Naive thymus-derived CD4-positive, alpha-beta T cell (primary cell): ENCODE measurements at regions of chr9 and their contacts with region 1.

Region 1: DNA sequence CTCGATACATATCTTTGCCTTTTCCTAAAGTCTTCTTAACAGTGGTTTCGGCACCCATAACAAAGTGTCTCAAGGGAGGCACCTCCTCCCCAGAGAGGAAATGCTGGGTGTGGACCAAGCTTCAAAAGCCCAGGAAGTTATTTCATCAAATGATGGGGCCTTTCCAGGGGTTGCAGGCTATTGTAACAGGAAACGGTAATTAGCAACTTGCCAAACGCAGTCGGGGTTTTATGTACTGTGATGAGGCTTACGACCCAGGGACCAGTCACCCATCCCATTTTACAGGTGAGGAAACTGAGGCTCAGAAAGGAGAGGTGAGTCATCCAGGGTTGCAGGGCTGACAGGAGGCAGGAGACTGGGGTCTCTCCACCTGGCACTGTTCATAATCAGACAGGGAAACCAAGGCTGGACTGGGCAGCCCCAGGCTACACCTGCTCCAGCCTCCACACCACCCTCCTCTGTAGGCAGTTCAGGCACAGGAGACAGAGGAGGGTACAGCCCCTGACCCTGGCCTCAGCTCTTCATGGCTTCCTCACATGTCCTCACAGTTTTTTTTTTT is 30.0 kb upstream of the SUSD3 start:
- DNase-seq: peak; percentile 38 to 94 (median 91)
- ATAC-seq: peak; percentile 93
- H3K4me3 ChIP-seq: peak overlapping the region; percentile 49
- H3K4me3 Mint-ChIP-seq: peak overlapping the region; percentile 80 to 91 (median 88)
- H3K27ac ChIP-seq: peak overlapping the region; percentile 90
- H3K27ac Mint-ChIP-seq: peak overlapping the region; percentile 96 to 100 (median 99)
- H3K4me1 ChIP-seq: peaks cover 62 to 93% of the 10 kb centered on the region in 2 donors
- H3K4me1 Mint-ChIP-seq: peaks cover 54 to 93% (median 82%) of the 10 kb centered on the region in 7 donors
- H3K27me3 ChIP-seq: no peaks in the 10 kb centered on the region
- H3K27me3 Mint-ChIP-seq: no peaks in the 10 kb centered on the region

Region 2: DNA sequence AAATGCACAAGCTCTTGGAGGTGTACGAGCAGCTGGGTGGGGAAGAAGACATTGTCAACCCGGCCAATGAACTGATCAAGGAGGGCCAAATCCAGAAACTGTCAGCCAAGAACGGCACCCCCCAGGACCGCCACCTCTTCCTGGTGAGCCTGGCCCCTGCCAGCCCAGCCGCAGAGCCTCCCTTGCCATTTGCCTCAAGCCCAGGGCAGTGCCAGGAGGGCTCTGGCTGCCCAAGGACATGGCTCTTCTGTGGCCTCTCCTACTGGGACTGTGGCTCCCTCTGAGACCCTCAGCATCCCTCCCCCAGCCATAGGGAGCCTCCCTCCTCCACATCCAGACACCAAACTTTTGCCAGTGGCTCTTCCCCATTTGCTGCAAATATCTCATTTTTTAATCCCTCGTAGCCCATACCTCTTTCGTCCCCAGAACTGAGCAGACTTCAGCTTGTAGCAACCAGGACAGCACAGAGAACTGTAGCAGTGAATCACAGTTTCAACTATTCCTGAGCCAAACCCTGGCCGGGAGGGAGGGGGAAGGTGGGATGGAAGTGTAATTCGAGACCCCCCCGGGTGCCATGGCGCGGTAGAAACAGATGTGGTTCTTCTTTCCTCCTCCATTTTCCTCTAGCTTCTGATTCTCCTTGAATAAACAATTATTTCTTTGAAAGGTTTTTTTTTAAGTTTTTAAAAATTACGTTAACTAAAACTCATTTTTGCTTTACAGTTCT is 14.5 kb before region 1 on chr9:
- CTCF ChIA-PET with region 1: interaction called, 11 read pairs
- POLR2A ChIA-PET with region 1: interaction called, 99 read pairs
- intact Hi-C with region 1: loop called in 1 of 2 experiments (anchors 2 kb)
- DNase-seq: no peak
- ATAC-seq: no peak
- H3K4me3 ChIP-seq: no peak overlapping the region
- H3K4me3 Mint-ChIP-seq: peak overlapping the region in 2 of 10 donors; percentile 14 to 20
- H3K27ac ChIP-seq: peak overlapping the region; percentile 0
- H3K27ac Mint-ChIP-seq: peak overlapping the region in 8 of 9 donors; percentile 27 to 91 (median 84)
- H3K4me1 ChIP-seq: peaks cover 0 to 8% of the 10 kb centered on the region in 2 donors
- H3K4me1 Mint-ChIP-seq: peaks cover 14 to 46% (median 25%) of the 10 kb centered on the region in 7 donors
- H3K27me3 ChIP-seq: no peaks in the 10 kb centered on the region
- H3K27me3 Mint-ChIP-seq: no peaks in the 10 kb centered on the region

Region 3: GRCh38 chr9:93041108-93041802 is 12.7 kb after region 1 on chr9:
- CTCF ChIA-PET with region 1: interaction called, 4 read pairs
- POLR2A ChIA-PET with region 1: interaction called, 94 read pairs
- intact Hi-C with region 1: loop called in 1 of 2 experiments (anchors 1 kb)
- DNase-seq: no peak
- ATAC-seq: no peak
- H3K4me3 ChIP-seq: no peak overlapping the region
- H3K4me3 Mint-ChIP-seq: peak overlapping the region in 5 of 10 donors; percentile 8 to 60 (median 48)
- H3K27ac ChIP-seq: peak overlapping the region; percentile 55
- H3K27ac Mint-ChIP-seq: peak overlapping the region; percentile 55 to 95 (median 92)
- H3K4me1 ChIP-seq: peaks cover 0 to 29% of the 10 kb centered on the region in 2 donors
- H3K4me1 Mint-ChIP-seq: peaks cover 32 to 85% (median 67%) of the 10 kb centered on the region in 7 donors
- H3K27me3 ChIP-seq: no peaks in the 10 kb centered on the region
- H3K27me3 Mint-ChIP-seq: peaks cover 0 to 2% (median 0%) of the 10 kb centered on the region in 5 donors

Region 4: DNA sequence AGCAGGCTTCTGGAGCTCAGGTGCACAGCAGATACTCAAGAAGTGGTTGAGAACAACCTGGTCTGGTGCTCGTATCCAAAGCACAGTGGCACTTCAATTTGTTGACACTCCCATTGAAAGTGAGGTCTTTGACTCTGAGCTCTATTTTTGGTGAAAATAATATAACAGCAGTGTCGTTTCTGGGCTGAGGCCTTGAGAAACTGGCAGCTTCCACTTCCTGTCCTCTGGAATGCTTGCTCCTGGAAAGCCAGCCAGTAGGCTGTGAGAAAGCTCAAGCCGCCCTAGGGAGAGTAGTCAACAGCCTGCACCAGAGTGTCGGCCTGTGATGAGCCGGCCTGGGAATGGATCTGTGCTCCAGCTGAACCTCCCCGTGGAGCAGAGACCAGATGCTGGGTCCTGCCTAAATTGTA is 23.2 kb after region 1 on chr9:
- CTCF ChIA-PET with region 1: interaction called, 3 read pairs
- POLR2A ChIA-PET with region 1: interaction called, 44 read pairs
- intact Hi-C with region 1: no loop called
- DNase-seq: no peak
- ATAC-seq: no peak
- H3K4me3 ChIP-seq: no peak overlapping the region
- H3K4me3 Mint-ChIP-seq: no peak overlapping the region
- H3K27ac ChIP-seq: no peak overlapping the region
- H3K27ac Mint-ChIP-seq: peak overlapping the region in 6 of 9 donors; percentile 21 to 72 (median 63)
- H3K4me1 ChIP-seq: peaks cover 0 to 16% of the 10 kb centered on the region in 2 donors
- H3K4me1 Mint-ChIP-seq: peaks cover 23 to 66% (median 54%) of the 10 kb centered on the region in 7 donors
- H3K27me3 ChIP-seq: no peaks in the 10 kb centered on the region
- H3K27me3 Mint-ChIP-seq: peaks cover 0 to 2% (median 0%) of the 10 kb centered on the region in 5 donors

Region 5: DNA sequence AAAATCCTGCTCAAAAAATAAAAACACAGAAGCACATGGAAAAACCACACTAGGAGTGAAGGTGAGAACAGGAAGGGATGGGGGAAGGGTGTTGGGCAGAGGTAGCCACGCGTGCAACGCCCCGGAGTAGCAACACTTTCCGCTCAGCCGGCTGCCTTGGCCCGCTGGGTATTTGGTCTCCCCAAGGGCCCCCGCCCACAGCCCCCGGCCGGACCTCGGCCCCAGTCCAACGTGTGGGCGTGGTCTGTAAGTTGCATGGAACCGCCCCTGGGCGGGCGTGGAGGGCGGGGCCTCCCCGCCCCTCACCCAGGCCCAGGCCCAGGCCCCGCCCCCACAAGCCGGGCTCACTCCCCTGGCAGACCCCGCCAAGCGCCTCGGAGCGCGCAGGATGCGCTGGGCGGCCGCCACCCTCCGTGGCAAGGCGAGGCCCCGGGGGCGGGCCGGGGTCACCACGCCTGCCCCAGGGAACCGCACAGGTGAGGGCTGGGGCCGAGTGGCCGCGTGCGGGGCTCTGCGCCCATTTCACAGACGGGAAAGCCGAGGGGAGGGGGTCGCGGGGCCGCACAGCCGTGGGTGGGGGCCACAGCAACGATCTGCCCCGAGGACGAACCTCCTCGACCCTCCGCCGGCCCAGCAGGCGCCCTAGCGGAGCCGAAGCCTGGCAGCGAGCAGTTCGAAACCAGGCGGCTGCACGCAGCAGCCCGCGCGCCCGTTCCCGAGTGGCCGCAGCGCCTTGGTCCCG is 30.0 kb after region 1 on chr9 and contains the start of gene SUSD3:
- CTCF ChIA-PET with region 1: interaction called, 12 read pairs
- POLR2A ChIA-PET with region 1: interaction called, 365 read pairs
- intact Hi-C with region 1: loop called (anchors 1 kb)
- DNase-seq: peak; percentile 47 to 82 (median 65)
- ATAC-seq: peak; percentile 81
- H3K4me3 ChIP-seq: peak within 1 kb of the TSS; percentile 90
- H3K4me3 Mint-ChIP-seq: peak within 1 kb of the TSS; percentile 93 to 97 (median 94)
- H3K27ac ChIP-seq: peak within 1 kb of the TSS; percentile 88
- H3K27ac Mint-ChIP-seq: peak within 1 kb of the TSS; percentile 97 to 100 (median 99)
- H3K4me1 ChIP-seq: peaks cover 52 to 56% of the 10 kb centered on the region in 2 donors
- H3K4me1 Mint-ChIP-seq: peaks cover 31 to 78% (median 65%) of the 10 kb centered on the region in 7 donors
- H3K27me3 ChIP-seq: no peaks in the 10 kb centered on the region
- H3K27me3 Mint-ChIP-seq: no peaks in the 10 kb centered on the region
- total RNA-seq, gene SUSD3: 62.8 to 83.5 (median 68.7) TPM

Region 6: DNA sequence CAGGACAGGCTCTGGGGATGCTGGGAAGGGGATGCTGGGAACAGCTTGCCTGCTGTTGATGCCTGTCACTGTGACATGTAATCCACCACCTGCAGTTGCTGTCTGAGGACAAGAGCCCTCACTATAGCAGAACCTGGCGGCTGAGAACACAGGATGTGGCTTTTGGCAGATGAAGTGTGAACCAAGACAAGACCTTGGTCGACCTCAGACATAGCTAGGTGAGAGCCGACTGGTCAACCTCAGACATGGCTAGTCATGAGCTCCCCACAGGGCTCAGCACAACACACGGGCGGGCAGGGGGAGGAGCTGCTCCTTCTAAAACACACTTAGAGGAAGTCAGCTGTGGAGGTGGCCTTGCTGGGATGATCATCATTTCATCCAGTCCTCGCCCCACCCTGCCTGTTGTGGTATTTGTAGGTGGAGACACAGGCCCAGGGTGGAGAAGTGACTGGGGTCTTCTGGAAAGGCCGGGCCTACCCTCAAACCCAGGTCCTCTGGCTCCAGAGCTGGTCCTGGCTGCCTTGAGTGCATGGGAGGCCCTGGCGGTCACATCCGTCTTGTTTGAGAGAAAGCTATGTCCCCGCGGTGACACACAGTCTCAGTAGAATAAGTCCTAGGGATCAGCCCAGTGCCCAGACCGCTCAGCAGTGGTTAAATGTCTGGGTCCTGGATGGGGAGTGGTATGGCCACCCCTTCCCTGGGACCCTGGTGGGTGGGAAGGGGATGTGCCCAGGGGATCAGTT is 36.0 kb after region 1 on chr9:
- CTCF ChIA-PET with region 1: interaction called, 12 read pairs
- POLR2A ChIA-PET with region 1: interaction called, 365 read pairs
- intact Hi-C with region 1: loop called (anchors 1 kb)
- DNase-seq: peak; percentile 54 to 95 (median 90)
- ATAC-seq: peak; percentile 96
- H3K4me3 ChIP-seq: peak overlapping the region; percentile 90
- H3K4me3 Mint-ChIP-seq: peak overlapping the region; percentile 87 to 97 (median 92)
- H3K27ac ChIP-seq: peak overlapping the region; percentile 88
- H3K27ac Mint-ChIP-seq: peak overlapping the region; percentile 97 to 100 (median 99)
- H3K4me1 ChIP-seq: peaks cover 63 to 87% of the 10 kb centered on the region in 2 donors
- H3K4me1 Mint-ChIP-seq: peaks cover 71 to 95% (median 86%) of the 10 kb centered on the region in 7 donors
- H3K27me3 ChIP-seq: no peaks in the 10 kb centered on the region
- H3K27me3 Mint-ChIP-seq: no peaks in the 10 kb centered on the region

Region 7: DNA sequence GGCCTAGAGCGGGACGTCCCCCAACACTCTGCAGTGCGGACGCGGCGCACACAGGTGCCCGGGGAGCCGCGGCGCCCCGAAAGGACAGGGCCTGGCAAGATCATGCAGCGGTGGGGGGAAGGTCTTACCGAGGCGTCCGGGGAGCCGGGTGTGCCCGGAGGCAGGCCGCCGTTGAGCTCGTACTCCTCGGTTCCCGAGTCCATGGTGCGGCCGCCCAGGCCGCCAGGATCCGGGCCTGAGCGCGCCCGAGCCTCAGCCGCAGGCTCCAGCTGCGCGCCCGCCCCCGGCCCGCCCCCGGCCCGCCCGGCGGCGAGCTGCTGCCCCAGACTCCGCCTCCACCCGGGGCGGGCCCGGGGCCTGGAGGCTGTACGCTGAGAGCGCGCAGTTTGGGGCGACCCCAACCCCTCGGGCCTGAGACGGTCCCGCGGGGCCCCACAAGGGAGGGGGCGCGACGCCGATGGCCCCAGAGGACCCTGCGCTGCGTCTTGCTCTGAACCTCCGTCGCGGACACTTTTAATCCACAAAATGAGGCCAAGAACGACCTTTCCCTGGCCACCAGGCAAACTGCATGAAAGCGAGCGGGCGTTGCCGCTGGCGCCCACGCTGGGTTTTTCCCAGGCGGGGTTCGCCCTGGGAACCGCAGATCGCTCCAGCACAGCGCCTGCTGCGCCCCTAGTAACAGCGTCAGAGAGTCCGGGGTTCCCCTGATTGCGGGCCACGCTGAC is 105.7 kb after region 1 on chr9 and contains the start of gene NINJ1:
- CTCF ChIA-PET with region 1: no interaction called
- POLR2A ChIA-PET with region 1: interaction called, 3 read pairs
- intact Hi-C with region 1: loop called (anchors 1 kb)
- DNase-seq: peak; percentile 72 to 93 (median 83)
- ATAC-seq: peak; percentile 87
- H3K4me3 ChIP-seq: peak within 1 kb of the TSS; percentile 68
- H3K4me3 Mint-ChIP-seq: peak within 1 kb of the TSS; percentile 87 to 92 (median 90)
- H3K27ac ChIP-seq: peak within 1 kb of the TSS; percentile 99
- H3K27ac Mint-ChIP-seq: peak within 1 kb of the TSS; percentile 84 to 98 (median 98)
- H3K4me1 ChIP-seq: peaks cover 27 to 55% of the 10 kb centered on the region in 2 donors
- H3K4me1 Mint-ChIP-seq: peaks cover 40 to 80% (median 63%) of the 10 kb centered on the region in 7 donors
- H3K27me3 ChIP-seq: no peaks in the 10 kb centered on the region
- H3K27me3 Mint-ChIP-seq: no peaks in the 10 kb centered on the region
- total RNA-seq, gene NINJ1: 30.7 to 163 (median 64.7) TPM